ENCODE measurements at regions of chr12 and their contacts with region 1.

Region 1: DNA sequence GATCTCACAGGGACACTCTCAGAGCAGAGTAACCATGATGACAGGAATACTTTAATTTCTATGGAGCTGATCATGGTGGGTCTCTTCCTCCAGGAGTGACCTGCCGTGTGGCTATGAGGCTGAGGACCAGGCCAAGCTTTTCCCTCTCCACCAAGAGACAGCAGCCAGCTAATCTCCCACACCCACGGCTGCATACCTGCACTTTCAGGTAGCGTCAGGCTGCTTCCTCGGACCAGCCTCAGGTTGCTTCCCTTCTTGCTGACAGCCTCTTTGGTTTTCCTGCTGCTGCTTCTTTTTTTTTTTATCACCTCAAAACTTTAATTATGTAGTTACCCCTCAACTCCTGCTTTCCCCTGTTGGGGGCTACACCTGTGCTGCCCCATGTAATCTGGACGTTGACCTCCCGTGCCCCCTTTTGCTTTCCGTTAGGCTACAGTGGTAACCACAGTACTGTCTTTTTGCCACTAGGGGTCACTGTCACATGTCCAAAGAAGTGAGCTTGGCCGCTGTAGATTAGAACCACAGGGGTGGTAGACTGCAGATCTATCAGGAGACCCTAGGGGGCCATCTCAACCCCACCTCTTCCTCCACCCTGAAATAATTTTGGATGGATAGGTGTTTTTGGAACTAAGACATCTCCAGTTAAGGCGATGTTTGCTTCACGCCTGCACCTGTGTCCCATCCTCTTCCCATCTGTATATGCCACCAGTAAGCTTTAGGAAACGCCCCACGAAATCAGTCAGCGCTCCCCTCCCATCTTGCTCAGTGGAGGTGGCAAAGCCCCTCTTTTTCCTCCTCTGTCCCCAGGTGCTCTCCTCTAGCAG is 7.8 kb upstream of the PIP4K2C start:
- DNase-seq: peak; percentile 83
- ATAC-seq: peak; percentile 100
- H3K4me3 Mint-ChIP-seq: no peak overlapping the region
- H3K27ac Mint-ChIP-seq: no peak overlapping the region
- H3K4me1 Mint-ChIP-seq: no peaks in the 10 kb centered on the region
- H3K27me3 Mint-ChIP-seq: no peaks in the 10 kb centered on the region
- CTCF ChIP-seq: peak; percentile 96

Region 2: DNA sequence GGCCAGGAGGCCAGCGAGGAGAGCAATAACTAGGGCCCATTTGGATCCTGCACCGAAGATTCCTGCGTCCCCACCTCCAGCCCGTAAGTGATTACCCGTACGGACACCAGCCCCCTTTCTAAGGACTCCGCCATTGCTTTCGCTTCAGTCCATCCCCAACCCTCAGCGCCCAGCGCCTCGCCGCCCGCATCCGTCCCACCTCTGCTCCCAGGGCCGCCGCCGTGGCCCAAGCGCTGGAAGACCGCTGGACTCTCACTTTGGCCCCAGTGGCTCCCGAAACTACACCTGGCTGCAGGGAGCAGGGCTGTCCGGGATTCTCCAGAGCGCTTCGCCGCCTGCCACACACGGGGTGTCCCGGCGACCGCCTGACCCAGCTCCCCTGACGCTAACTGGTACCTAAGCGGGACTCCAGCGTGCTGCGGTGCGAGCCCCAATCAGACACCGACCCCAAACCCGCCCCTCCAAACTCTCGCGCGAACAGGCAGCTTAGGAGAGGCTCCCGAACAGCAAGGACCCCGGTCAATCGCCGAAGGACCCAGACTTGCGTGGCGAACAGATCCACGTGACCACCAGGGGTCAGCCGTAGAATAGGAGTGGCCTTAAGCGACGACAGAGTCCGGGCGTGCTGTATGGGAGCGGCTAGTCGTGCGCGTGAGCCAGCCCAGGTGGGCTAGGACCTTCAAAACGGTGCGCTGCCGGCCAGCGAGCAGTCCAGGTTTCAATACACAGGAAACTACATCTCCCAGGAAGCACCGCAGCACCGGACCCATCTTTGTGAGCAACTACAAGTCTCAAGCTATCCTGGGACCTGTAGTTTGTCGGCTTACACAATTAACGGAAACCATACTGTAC is 1267.4 kb before region 1 on chr12 and contains the start of gene CNPY2:
- CTCF ChIA-PET with region 1: no interaction called
- POLR2A ChIA-PET with region 1: no interaction called
- intact Hi-C with region 1: no loop called
- DNase-seq: peak; percentile 98
- ATAC-seq: peak; percentile 91
- H3K4me3 Mint-ChIP-seq: peak within 1 kb of the TSS; percentile 85
- H3K27ac Mint-ChIP-seq: peak within 1 kb of the TSS; percentile 92
- H3K4me1 Mint-ChIP-seq: peaks cover 9% of the 10 kb centered on the region
- H3K27me3 Mint-ChIP-seq: no peaks in the 10 kb centered on the region
- CTCF ChIP-seq: no peak
- total RNA-seq, gene CNPY2: 81.0 to 81.7 TPM

Region 3: DNA sequence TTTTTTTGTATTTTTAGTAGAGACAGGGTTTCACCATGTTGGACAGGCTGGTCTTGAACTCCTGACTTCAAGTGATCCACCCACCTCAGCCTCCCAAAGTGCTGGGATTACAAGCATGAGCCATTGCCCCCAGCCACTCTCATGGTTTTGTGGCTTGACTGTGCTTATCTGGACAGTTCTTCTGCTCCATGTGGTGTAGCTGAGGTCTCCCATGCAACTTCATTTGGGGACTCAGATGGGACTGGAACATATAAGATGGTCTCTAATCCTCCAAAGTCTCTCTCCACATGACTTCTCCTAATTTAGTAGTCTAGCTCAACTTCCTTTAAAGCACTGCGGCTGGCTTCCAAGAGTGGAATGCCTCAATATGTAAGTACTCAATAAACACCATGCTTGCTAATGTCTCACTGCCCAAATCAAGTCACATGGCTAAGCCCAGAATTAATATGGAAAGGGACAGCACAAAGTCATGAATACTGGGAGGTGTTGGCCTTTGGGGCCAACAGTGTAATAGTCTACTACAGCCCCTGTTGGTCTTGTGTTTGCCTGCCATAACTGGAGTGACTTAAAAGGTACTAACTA is 141.3 kb before region 1 on chr12:
- CTCF ChIA-PET with region 1: no interaction called
- POLR2A ChIA-PET with region 1: no interaction called
- intact Hi-C with region 1: no loop called
- DNase-seq: no peak
- ATAC-seq: no peak
- H3K4me3 Mint-ChIP-seq: no peak overlapping the region
- H3K27ac Mint-ChIP-seq: no peak overlapping the region
- H3K4me1 Mint-ChIP-seq: no peaks in the 10 kb centered on the region
- H3K27me3 Mint-ChIP-seq: peaks cover 3% of the 10 kb centered on the region
- CTCF ChIP-seq: no peak

Region 4: GRCh38 chr12:57563358-57563757 is 19.9 kb before region 1 on chr12:
- CTCF ChIA-PET with region 1: interaction called, 13 read pairs
- POLR2A ChIA-PET with region 1: no interaction called
- intact Hi-C with region 1: no loop called
- DNase-seq: no peak
- ATAC-seq: no peak
- H3K4me3 Mint-ChIP-seq: no peak overlapping the region
- H3K27ac Mint-ChIP-seq: no peak overlapping the region
- H3K4me1 Mint-ChIP-seq: no peaks in the 10 kb centered on the region
- H3K27me3 Mint-ChIP-seq: no peaks in the 10 kb centered on the region
- CTCF ChIP-seq: no peak

Region 5: GRCh38 chr12:57604454-57604991 is 21.3 kb after region 1 on chr12 and contains the start of gene DTX3:
- CTCF ChIA-PET with region 1: interaction called, 28 read pairs
- POLR2A ChIA-PET with region 1: interaction called, 4 read pairs
- intact Hi-C with region 1: no loop called
- DNase-seq: peak; percentile 66
- ATAC-seq: peak; percentile 62
- H3K4me3 Mint-ChIP-seq: peak within 1 kb of the TSS; percentile 74
- H3K27ac Mint-ChIP-seq: peak within 1 kb of the TSS; percentile 81
- H3K4me1 Mint-ChIP-seq: peaks cover 25% of the 10 kb centered on the region
- H3K27me3 Mint-ChIP-seq: no peaks in the 10 kb centered on the region
- CTCF ChIP-seq: no peak
- total RNA-seq, gene DTX3: 13.7 to 15.1 TPM

Region 6: DNA sequence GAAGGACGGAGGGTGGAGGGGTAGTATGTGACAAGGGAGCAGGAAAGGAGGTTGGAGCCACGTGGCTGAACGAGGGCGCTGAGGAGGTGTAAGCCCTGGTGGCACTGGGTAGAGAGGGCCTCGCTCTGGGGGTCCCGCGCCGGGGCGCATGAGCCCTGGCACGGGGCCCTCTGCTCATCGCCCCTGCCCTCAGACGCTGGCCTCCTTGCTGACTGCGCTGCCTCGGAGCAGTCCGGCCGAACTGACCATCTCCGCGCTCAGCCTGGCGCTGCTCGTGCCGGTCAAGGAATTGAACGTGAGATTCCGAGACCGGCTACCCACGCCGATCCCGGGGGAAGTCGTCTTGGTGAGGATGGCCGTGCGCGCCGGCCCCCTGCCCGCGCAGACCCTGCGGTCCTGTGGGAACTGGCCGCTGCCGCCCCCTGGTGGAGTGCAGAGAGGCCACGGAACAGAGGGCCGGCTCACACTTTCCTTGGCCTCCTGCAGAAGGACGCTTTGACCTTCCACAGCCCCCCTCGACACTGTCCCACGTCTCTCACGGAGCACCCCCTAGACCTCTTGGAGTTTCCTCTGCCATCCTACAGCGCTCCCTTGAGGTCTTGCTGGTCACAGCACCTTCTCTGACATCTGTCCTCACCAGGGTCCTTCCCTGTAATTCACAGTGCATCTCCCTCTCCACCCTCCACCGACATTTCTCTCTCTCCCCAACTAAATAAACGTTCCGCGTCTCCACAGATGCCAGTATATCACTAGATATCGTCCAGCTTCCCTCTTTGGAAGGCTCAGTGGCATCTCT is 38.5 kb after region 1 on chr12:
- CTCF ChIA-PET with region 1: interaction called, 124 read pairs
- POLR2A ChIA-PET with region 1: interaction called, 6 read pairs
- intact Hi-C with region 1: loop called (anchors 2 kb)
- DNase-seq: peak; percentile 74
- ATAC-seq: peak; percentile 81
- H3K4me3 Mint-ChIP-seq: peak overlapping the region; percentile 64
- H3K27ac Mint-ChIP-seq: no peak overlapping the region
- H3K4me1 Mint-ChIP-seq: peaks cover 17% of the 10 kb centered on the region
- H3K27me3 Mint-ChIP-seq: peaks cover 85% of the 10 kb centered on the region
- CTCF ChIP-seq: peak; percentile 99

Region 7: GRCh38 chr12:57632694-57633477 is 49.7 kb after region 1 on chr12 and contains the start of gene B4GALNT1:
- CTCF ChIA-PET with region 1: interaction called, 32 read pairs
- POLR2A ChIA-PET with region 1: no interaction called
- intact Hi-C with region 1: no loop called
- DNase-seq: peak; percentile 58
- ATAC-seq: peak; percentile 80
- H3K4me3 Mint-ChIP-seq: peak within 1 kb of the TSS; percentile 48
- H3K27ac Mint-ChIP-seq: no peak within 1 kb of the TSS
- H3K4me1 Mint-ChIP-seq: peaks cover 13% of the 10 kb centered on the region
- H3K27me3 Mint-ChIP-seq: peaks cover 56% of the 10 kb centered on the region
- CTCF ChIP-seq: peak; percentile 81
- total RNA-seq, gene B4GALNT1: 0.61 to 1.4 TPM

Region 8: DNA sequence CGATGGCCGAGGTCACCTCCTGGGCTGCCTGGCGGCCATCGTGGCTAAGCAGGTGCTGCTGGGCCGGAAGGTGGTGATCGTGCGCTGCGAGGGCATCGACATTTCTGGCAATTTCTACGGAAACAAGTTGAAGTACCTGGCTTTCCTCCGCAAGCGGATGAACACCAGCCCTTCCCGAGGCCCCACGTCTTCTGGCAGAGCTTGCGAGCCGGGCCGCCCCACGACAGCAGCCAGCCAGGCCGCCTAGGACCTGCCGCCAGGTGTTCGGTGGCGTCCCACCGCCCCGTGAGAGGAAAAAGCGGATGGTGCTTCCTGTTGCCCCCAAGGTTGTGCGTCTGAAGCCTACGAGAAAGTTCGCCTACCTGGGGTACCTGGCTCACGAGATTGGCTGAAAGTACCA is 91.5 kb after region 1 on chr12:
- CTCF ChIA-PET with region 1: interaction called, 10 read pairs
- POLR2A ChIA-PET with region 1: no interaction called
- intact Hi-C with region 1: no loop called
- DNase-seq: no peak
- ATAC-seq: no peak
- H3K4me3 Mint-ChIP-seq: no peak overlapping the region
- H3K27ac Mint-ChIP-seq: no peak overlapping the region
- H3K4me1 Mint-ChIP-seq: no peaks in the 10 kb centered on the region
- H3K27me3 Mint-ChIP-seq: no peaks in the 10 kb centered on the region
- CTCF ChIP-seq: no peak

Region 9: DNA sequence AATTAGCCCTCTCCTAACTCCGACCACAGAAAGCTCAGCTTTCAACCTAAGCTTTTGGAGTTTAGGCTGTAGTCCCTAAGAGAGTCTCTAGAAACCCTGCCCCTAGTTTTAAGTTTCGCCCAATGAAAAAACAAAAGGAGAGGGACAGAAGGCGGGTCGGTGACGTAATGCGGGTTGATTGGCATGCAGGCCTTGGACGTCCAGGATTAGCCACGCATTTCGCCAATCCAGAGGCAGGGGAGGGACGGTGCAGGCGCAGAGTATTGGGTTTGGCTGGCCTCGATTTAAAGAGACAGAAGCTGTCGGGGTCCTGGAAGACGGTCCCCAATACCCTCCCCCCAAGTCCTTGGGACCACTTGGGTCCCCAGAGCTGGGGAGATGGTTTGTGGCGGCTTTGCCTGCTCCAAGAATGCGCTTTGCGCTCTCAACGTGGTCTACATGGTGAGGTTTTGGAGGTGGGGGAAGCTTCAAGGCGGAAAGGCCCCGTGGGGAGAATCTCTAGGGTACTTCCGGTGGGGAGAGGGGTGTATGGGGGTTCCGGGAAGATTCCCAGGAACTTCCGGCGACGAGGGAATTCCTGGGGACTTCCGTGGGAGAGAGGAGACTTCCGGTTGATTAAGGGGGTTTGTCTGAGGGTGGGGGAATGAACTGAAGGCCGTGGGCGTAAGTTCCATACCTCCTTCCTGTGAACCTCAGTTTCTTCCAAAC is 161.7 kb after region 1 on chr12 and contains the start of gene TSPAN31:
- CTCF ChIA-PET with region 1: interaction called, 29 read pairs
- POLR2A ChIA-PET with region 1: no interaction called
- intact Hi-C with region 1: loop called (anchors 2 kb)
- DNase-seq: peak; percentile 99
- ATAC-seq: peak; percentile 81
- H3K4me3 Mint-ChIP-seq: peak within 1 kb of the TSS; percentile 92
- H3K27ac Mint-ChIP-seq: peak within 1 kb of the TSS; percentile 94
- H3K4me1 Mint-ChIP-seq: peaks cover 44% of the 10 kb centered on the region
- H3K27me3 Mint-ChIP-seq: no peaks in the 10 kb centered on the region
- CTCF ChIP-seq: no peak
- total RNA-seq, gene TSPAN31: 6.9 to 7.5 TPM